K562 (cell line): ENCODE measurements at regions of chr21 and their contacts with region 1.

Region 1: DNA sequence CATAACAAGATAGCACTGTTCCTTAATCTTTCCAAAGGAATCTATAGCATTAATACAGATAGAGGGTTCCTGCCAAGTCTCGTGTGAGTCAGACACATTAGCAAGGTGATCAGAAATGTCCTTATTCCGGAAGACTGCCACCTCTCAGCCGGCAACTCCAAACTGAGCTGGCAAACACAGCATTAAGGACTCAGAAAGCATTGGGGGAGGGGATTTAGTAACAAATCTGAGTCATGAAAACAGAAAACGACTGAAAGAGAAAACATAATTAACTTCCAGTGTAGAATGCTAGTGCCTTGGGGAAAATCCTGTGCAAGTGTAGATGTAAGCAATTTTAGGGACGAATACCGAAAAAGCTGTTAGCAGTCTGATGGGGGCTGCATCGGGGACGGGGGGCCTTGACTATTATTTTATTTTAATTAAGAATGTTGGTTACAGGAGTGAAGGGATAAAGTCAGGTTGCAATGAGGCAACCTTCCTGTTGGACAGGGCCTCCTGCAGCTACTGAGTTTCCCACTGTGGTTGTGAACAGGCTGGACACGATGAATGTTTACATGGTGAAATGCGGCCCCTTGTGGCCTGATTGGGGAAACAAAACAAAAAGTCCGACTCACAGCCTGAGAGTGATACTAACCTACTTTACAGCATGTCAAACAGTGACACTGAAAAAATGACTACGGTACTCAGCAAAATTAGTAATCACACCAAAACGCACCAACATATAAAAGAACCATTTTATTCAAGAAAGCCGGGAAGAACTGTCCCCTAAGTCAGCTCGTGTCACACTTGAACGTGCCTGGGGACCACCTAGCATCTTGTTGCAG is 20.7 kb downstream of the MIS18A start:
- DNase-seq: peak; percentile 76 to 84 (median 78)
- ATAC-seq: peak; percentile 97
- H3K4me3 ChIP-seq: no peak overlapping the region
- H3K27ac ChIP-seq: no peak overlapping the region
- H3K4me1 ChIP-seq: 0 out of 5 replicates have a peak, but pooled peaks cover 0 to 3% of the 10 kb centered on the region in 2 experiments
- H3K27me3 ChIP-seq: peaks cover 40 to 41% of the 10 kb centered on the region in 2 experiments
- CTCF ChIP-seq: peak; percentile 87 to 94 (median 91)
- EP300 ChIP-seq: no peak
- POLR2A ChIP-seq: no peak
- RAD21 ChIP-seq: peak; percentile 88 to 93

Region 2: DNA sequence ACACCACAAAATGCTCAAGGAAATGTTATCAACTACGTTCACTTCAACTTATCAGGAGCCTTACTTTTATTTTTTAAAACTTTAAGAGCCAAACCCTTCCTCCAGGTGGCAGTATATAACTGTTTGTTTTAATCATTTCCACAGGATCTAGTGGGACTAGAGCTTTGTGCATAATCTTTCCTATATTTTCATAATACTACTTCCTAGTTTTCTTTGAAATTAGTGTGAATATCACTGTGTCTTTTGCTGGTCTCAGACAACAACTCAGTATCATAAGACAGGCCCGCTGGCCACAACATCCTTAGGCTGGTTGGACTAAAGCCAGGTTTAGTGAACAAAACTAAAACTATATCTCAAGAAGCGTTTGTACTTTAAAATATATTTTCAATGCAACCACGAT is 1059.6 kb before region 1 on chr21:
- CTCF ChIA-PET with region 1: interaction called, 10 read pairs
- POLR2A ChIA-PET with region 1: no interaction called
- in situ Hi-C with region 1: no loop called
- intact Hi-C with region 1: no loop called
- DNase-seq: peak; percentile 43 to 63 (median 49)
- ATAC-seq: peak; percentile 84
- H3K4me3 ChIP-seq: no peak overlapping the region
- H3K27ac ChIP-seq: no peak overlapping the region
- H3K4me1 ChIP-seq: no peaks in the 10 kb centered on the region
- H3K27me3 ChIP-seq: peaks cover 5% of the 10 kb centered on the region in 2 experiments; a peak in 3 of 5 replicates
- CTCF ChIP-seq: peak in 2 of 3 experiments; percentile 60 to 85; a peak in 4 of 6 replicates
- EP300 ChIP-seq: no peak
- POLR2A ChIP-seq: no peak
- RAD21 ChIP-seq: peak; percentile 73 to 90

Region 3: DNA sequence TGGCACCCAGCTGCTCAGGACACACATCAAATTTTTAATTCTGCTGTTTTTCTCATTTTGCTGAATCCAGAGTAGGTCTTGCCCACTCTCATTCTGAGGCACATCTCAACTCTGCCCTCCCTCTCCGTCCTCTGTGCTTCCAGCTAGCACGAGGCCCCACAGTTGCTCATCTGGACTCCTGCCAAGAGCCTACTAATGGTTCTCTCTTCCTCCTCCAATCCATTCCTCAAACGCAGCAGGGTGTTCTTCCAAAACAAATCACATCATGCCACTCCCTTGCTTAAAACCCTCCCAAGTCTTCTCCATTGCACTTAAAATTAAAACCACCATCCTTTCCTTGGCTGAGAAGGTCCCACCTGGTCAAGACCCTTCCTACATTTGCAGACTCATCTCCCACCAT is 476.4 kb before region 1 on chr21:
- CTCF ChIA-PET with region 1: interaction called, 8 read pairs
- POLR2A ChIA-PET with region 1: no interaction called
- in situ Hi-C with region 1: no loop called
- intact Hi-C with region 1: loop called (anchors 1 kb)
- DNase-seq: peak in 1 of 4 experiments; percentile 43
- ATAC-seq: 0 out of 3 replicates have a peak, but pooled peaks have one; percentile 11
- H3K4me3 ChIP-seq: no peak overlapping the region
- H3K27ac ChIP-seq: no peak overlapping the region
- H3K4me1 ChIP-seq: 0 out of 5 replicates have a peak, but pooled peaks cover 0 to 4% of the 10 kb centered on the region in 2 experiments
- H3K27me3 ChIP-seq: peaks cover 6 to 10% of the 10 kb centered on the region in 2 experiments; a peak in 1 of 5 replicates
- CTCF ChIP-seq: no peak
- EP300 ChIP-seq: no peak
- POLR2A ChIP-seq: no peak
- RAD21 ChIP-seq: no peak

Region 4: GRCh38 chr21:31866077-31866511 is 392.1 kb before region 1 on chr21:
- CTCF ChIA-PET with region 1: interaction called, 6 read pairs
- POLR2A ChIA-PET with region 1: interaction called, 3 read pairs
- in situ Hi-C with region 1: no loop called
- intact Hi-C with region 1: loop called (anchors 1 kb)
- DNase-seq: peak; percentile 76 to 82 (median 81)
- ATAC-seq: peak; percentile 98
- H3K4me3 ChIP-seq: no peak overlapping the region
- H3K27ac ChIP-seq: no peak overlapping the region
- H3K4me1 ChIP-seq: peaks cover 0 to 4% of the 10 kb centered on the region in 2 experiments; a peak in 1 of 5 replicates
- H3K27me3 ChIP-seq: peaks cover 9% of the 10 kb centered on the region in 2 experiments; a peak in 4 of 5 replicates
- CTCF ChIP-seq: peak; percentile 82 to 91 (median 83)
- EP300 ChIP-seq: no peak
- POLR2A ChIP-seq: no peak
- RAD21 ChIP-seq: peak; percentile 53 to 70

Region 5: DNA sequence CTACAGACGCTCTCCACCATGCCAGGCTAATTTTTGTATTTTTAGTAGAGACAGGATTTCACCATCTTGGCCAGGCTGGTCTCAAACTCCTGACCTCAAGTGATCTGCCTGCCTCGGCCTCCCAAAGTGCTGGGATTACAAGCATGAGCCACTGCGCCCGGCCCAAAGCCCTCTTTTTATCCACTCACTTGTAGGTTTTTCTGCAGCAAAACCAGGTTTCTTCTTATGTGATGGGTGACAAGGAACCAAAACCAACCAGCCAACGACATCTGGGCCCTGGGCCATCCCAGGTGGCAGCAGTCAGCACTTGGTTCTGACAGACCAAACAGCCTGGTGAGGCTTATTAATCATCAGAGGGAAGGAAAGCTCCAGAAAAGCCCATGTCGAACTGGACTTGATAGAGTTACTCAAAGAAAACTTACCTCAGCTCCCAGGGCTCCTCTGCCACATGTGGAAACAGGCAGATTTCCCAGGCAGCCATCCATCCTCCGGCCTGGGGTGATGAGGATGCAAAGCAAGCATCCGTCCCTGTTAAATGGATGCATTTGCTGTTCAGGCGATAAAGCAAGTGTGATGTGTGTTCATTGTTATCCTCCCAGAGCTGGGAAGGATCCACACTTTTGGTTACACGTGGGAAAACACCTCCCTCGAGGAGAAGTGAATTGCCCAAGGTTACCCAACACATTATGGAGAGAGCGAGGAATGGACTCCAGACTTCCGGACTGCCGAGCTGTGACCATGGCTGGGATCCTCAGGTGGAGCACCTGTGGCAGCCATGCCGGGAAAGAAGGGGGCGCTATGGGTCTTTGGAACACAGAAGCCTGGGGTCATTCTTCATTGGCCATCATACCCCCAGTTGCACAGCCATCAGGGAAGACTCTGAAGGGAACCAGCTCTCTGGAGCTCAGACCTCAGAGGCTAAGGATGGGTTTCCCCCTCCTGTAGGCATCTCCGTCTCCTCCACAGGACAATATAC is 266.5 kb before region 1 on chr21:
- CTCF ChIA-PET with region 1: interaction called, 3 read pairs
- POLR2A ChIA-PET with region 1: no interaction called
- in situ Hi-C with region 1: no loop called
- intact Hi-C with region 1: loop called (anchors 1 kb)
- DNase-seq: peak in 1 of 4 experiments; percentile 26
- ATAC-seq: peak; percentile 77
- H3K4me3 ChIP-seq: no peak overlapping the region
- H3K27ac ChIP-seq: no peak overlapping the region
- H3K4me1 ChIP-seq: no peaks in the 10 kb centered on the region
- H3K27me3 ChIP-seq: peaks cover 23 to 47% of the 10 kb centered on the region in 2 experiments
- CTCF ChIP-seq: peak; percentile 45 to 58 (median 53); a peak in 5 of 6 replicates
- EP300 ChIP-seq: no peak
- POLR2A ChIP-seq: no peak
- RAD21 ChIP-seq: peak; percentile 22 to 58; a peak in 3 of 4 replicates

Region 6: GRCh38 chr21:32096411-32096810 is 161.8 kb before region 1 on chr21:
- CTCF ChIA-PET with region 1: interaction called, 3 read pairs
- POLR2A ChIA-PET with region 1: interaction called, 4 read pairs
- in situ Hi-C with region 1: no loop called
- intact Hi-C with region 1: loop called (anchors 1 kb)
- DNase-seq: peak; percentile 52 to 65 (median 55)
- ATAC-seq: no peak; the same call in 1 of the 3 replicates
- H3K4me3 ChIP-seq: no peak overlapping the region
- H3K27ac ChIP-seq: no peak overlapping the region
- H3K4me1 ChIP-seq: no peaks in the 10 kb centered on the region
- H3K27me3 ChIP-seq: peaks cover 0 to 13% of the 10 kb centered on the region in 2 experiments; a peak in 2 of 5 replicates
- CTCF ChIP-seq: peak; percentile 64 to 76 (median 70)
- EP300 ChIP-seq: no peak
- POLR2A ChIP-seq: no peak
- RAD21 ChIP-seq: peak in 1 of 2 experiments; percentile 45; a peak in 2 of 4 replicates

Region 7: GRCh38 chr21:32184485-32184884 is 73.7 kb before region 1 on chr21:
- CTCF ChIA-PET with region 1: no interaction called
- POLR2A ChIA-PET with region 1: no interaction called
- in situ Hi-C with region 1: no loop called
- intact Hi-C with region 1: loop called (anchors 1 kb)
- DNase-seq: peak in 1 of 4 experiments; percentile 17
- ATAC-seq: peak; percentile 78
- H3K4me3 ChIP-seq: no peak overlapping the region
- H3K27ac ChIP-seq: no peak overlapping the region
- H3K4me1 ChIP-seq: no peaks in the 10 kb centered on the region
- H3K27me3 ChIP-seq: peaks cover 4 to 32% of the 10 kb centered on the region in 2 experiments; a peak in 4 of 5 replicates
- CTCF ChIP-seq: peak in 2 of 3 experiments; percentile 25 to 35; a peak in 4 of 6 replicates
- EP300 ChIP-seq: no peak
- POLR2A ChIP-seq: no peak
- RAD21 ChIP-seq: peak in 1 of 2 experiments; percentile 22; a peak in 1 of 4 replicates

Region 8: GRCh38 chr21:32329331-32329730 is 71.2 kb after region 1 on chr21:
- CTCF ChIA-PET with region 1: no interaction called
- POLR2A ChIA-PET with region 1: no interaction called
- in situ Hi-C with region 1: no loop called
- intact Hi-C with region 1: no loop called
- DNase-seq: no peak
- ATAC-seq: no peak; the same call in 2 of the 3 replicates
- H3K4me3 ChIP-seq: no peak overlapping the region
- H3K27ac ChIP-seq: no peak overlapping the region
- H3K4me1 ChIP-seq: peaks cover 0 to 2% of the 10 kb centered on the region in 2 experiments; a peak in 1 of 5 replicates
- H3K27me3 ChIP-seq: no peaks in the 10 kb centered on the region
- CTCF ChIP-seq: no peak
- EP300 ChIP-seq: no peak
- POLR2A ChIP-seq: no peak
- RAD21 ChIP-seq: no peak

Region 9: GRCh38 chr21:32878661-32879060 is 620.5 kb after region 1 on chr21:
- CTCF ChIA-PET with region 1: no interaction called
- POLR2A ChIA-PET with region 1: no interaction called
- in situ Hi-C with region 1: no loop called
- intact Hi-C with region 1: no loop called
- DNase-seq: no peak
- ATAC-seq: no peak
- H3K4me3 ChIP-seq: no peak overlapping the region
- H3K27ac ChIP-seq: no peak overlapping the region
- H3K4me1 ChIP-seq: no peaks in the 10 kb centered on the region
- H3K27me3 ChIP-seq: peaks cover 4 to 15% of the 10 kb centered on the region in 2 experiments
- CTCF ChIP-seq: no peak
- EP300 ChIP-seq: no peak
- POLR2A ChIP-seq: no peak
- RAD21 ChIP-seq: no peak